ENCODE measurements at regions of chr7 and their contacts with region 1.

Region 1: DNA sequence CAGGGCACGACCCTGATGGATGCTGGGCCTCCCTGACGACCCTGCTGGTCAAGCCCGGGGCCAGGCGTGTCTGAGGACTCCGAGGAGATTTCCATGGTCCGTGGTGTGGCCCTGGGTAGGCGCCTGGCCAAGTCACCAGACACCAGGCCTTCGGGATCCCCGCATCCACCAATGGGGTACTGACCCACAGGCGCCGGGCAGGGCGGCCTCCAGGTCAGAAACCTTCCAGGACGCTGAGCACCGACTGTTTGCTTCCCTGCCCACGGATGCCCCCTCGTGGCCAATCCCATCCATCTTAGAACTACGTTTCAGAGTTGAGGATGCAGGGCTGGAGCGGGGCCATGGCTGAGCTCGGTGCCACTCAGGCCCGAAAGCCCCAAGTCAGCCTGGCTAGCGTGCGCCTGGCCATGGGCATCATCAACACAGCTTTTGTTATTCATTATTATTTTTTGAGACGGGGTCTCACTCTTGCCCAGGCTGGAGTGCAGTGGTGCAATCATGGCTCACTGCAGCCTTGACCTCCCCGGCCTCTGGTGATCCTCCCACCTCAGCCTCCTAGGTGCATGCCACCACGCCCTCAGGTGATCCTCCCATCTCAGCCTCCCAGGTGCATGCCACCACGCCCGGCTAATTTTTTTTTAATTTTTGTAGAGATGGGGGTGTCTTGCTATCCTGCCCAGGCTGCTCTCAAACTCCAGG is 7.1 kb upstream of the AMZ1 start:
- DNase-seq: no peak
- H3K4me3 ChIP-seq: no peak overlapping the region
- CTCF ChIP-seq: peak; percentile 85

Region 2: GRCh38 chr7:2567679-2568278 is 113.2 kb before region 1 on chr7:
- CTCF ChIA-PET with region 1: interaction called, 68 read pairs
- POLR2A ChIA-PET with region 1: no interaction called
- DNase-seq: no peak
- H3K4me3 ChIP-seq: no peak overlapping the region
- CTCF ChIP-seq: peak; percentile 77

Region 3: DNA sequence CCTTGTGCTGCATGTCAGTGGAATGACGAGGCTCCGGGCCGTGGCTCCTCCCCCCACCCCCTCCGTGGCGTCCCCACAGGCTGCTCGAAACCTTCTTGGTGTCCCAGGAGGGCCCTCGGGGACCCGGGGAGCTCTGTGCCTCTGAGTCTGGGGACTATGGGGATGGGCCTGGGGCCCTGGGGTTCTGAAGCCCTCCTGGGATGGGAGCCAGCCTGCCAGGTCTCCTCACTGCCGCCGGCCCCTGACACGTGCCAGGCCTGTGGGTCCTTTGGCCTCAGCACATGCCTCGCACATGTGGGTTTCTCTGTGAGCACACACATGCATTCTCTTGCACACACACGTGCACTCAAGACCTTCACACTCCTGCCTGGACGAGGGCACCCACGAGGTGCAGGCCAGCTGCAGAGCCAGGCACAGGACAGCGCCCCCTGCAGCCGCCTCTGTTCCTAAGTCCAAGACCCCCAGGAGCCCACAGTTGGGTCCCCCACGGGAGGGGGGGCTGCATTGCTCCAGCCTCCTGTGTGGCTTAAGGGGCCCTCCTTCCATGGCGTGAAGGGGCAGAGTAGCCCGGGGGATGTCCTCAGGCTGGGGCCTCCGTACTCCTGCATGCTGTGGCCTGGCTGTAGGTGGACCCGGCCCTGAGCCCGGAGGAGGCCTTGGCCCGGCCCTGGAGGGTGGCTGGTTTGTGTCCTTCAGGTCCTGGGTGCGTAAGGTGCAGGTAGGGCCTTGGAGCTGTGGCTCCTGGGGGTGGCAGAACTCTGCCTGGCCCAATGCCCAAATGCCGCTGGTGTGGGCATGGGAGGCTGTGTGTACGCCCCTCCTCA is 20.1 kb before region 1 on chr7:
- CTCF ChIA-PET with region 1: interaction called, 10 read pairs
- POLR2A ChIA-PET with region 1: no interaction called
- DNase-seq: no peak
- H3K4me3 ChIP-seq: no peak overlapping the region
- CTCF ChIP-seq: peak; percentile 15

Region 4: GRCh38 chr7:2785071-2785500 is 104.1 kb after region 1 on chr7:
- CTCF ChIA-PET with region 1: no interaction called
- POLR2A ChIA-PET with region 1: no interaction called
- DNase-seq: no peak
- H3K4me3 ChIP-seq: no peak overlapping the region
- CTCF ChIP-seq: no peak